ENCODE measurements at regions of chr15 and their contacts with region 1.

Region 1: GRCh38 chr15:82709421-82710207 is at the start of gene AP3B2:
- DNase-seq: peak; percentile 69
- H3K4me3 Mint-ChIP-seq: peak within 1 kb of the TSS; percentile 58
- H3K27ac Mint-ChIP-seq: no peak within 1 kb of the TSS
- H3K4me1 Mint-ChIP-seq: no peaks in the 10 kb centered on the region
- H3K27me3 Mint-ChIP-seq: peaks cover 21% of the 10 kb centered on the region
- total RNA-seq, gene AP3B2: 0.37 to 0.52 TPM

Region 2: DNA sequence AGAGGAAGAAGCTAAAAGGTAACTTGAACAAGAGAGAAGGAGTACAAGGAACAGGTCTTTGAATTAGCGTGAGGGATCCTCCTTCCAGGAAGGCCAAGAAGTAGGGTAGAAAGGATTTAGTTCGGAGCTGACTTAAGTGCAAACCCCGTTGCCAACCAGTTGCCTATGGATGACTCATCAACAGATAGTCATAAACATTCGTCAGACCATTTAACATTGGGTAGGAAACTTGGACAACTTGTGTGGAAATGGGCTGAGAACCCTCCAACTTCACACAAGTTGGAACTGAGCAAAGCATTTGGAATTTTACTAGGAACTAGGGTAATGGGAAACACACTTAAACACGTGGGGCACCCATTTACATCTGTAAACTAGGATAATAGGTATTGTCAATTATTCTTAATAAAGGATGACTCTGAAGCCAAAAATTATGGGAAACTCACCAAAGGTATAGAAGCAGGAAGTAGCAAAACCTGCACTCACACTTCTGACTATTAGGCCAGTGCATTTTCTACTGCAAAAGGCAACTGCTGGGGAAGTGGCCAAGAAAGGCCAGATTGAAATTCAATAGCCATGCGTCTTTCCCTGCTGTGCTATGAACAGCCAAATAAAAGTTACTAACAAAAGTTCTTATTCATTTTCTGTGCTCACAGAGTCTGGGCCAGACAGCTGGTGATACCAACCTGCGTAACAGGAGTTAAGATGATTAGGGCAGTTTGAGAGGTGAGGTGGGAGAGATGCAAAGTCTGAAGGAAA is 1161.1 kb before region 1 on chr15:
- CTCF ChIA-PET with region 1: no interaction called
- intact Hi-C with region 1: no loop called
- DNase-seq: no peak
- H3K4me3 Mint-ChIP-seq: no peak overlapping the region
- H3K27ac Mint-ChIP-seq: no peak overlapping the region
- H3K4me1 Mint-ChIP-seq: no peaks in the 10 kb centered on the region
- H3K27me3 Mint-ChIP-seq: peaks cover 9% of the 10 kb centered on the region

Region 3: DNA sequence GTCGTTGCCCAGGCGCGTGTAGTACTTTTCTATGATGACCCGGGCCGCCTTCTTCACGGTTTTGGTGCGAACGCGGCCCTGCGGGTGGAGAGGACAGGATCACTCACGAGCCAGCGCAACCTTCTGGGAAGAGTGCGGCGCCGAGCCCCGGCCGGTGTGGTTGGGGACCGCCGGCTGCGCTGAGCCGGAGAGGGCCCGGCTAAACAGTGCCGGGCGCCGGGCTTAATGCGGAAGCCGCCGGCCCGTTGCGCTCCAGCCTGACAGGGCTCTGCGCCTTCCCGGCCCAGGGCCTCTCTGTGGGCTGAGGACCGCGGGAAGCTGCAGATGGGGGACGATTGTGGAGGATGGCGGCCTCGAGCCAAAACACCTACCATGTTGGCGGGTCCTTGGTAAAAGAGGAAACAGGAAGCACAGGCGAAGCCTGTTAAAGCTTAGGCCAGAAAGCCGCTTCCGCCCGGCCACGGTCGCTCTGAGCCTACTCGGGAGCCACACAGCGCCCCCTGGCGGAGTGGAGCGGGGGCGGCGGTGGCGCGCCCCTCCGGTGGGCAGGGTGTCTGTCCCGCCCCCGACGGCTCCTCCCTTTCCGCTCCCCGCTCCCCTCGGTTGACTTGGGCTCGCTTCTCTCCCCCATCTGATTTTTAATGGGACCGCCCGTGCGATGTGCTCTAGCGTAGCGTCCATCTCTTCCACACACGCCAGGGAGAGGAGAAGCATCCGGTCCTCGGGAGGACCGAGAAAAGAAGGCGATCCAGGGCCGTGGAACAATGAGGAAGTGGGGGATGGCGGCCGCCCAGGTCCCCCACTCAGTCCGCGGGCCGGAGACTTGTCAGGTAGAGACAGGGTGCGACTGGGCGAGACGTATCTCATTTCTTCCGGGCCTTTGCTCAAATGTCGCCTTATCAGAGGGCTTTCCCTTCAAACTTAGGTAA is 169.3 kb before region 1 on chr15 and contains the start of gene RPS17:
- CTCF ChIA-PET with region 1: no interaction called
- intact Hi-C with region 1: loop called (anchors 1 kb)
- DNase-seq: peak; percentile 96
- H3K4me3 Mint-ChIP-seq: peak within 1 kb of the TSS; percentile 85
- H3K27ac Mint-ChIP-seq: peak within 1 kb of the TSS; percentile 96
- H3K4me1 Mint-ChIP-seq: peaks cover 34% of the 10 kb centered on the region
- H3K27me3 Mint-ChIP-seq: no peaks in the 10 kb centered on the region
- total RNA-seq, gene RPS17: 3,025 to 3,069 TPM

Region 4: DNA sequence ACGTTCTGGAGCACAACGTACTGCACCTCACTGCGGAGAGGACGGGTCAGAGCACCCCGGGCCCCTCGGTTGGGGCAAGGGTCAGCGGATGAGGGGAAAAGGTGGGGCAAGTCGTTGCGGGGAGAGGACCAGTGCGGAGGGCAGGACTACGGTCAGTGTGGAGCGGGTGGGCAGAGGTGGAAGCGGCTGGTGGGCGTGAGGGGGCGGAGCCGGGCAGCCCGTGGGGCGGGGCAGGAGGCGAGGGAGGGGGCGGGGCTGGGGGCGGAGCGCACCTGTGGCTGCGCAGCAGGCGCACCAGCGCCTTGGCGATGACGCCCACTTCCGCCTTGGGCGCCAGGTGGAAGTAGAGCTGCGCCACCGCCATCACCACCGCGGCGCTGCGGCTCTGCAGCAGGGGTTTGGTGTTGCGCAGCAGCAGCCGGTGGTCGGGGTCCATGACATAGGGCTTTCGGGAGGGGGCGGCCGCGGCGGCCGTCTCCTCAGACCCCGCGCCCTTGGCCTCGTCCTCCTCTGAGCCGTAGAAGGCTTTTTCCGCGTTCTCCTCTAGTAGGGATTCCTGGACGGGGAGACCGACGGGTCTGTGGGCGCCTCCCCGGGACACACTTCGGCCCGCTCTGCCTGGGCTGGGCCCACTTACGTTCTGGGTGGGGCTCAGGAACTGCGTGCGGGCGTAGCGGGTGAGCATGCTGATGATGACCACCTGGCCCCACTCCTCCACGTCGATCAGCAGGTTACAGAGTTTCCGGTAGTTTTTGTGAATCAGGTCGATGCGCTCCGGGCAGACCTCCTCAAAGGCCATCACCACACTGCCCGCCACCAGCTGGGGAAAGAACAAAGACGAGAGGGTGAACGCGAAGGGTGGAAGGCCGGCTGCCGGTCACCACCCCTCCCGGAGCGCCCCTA is 29.2 kb before region 1 on chr15:
- CTCF ChIA-PET with region 1: no interaction called
- intact Hi-C with region 1: loop called (anchors 1 kb)
- DNase-seq: peak; percentile 86
- H3K4me3 Mint-ChIP-seq: peak overlapping the region; percentile 88
- H3K27ac Mint-ChIP-seq: peak overlapping the region; percentile 47
- H3K4me1 Mint-ChIP-seq: peaks cover 7% of the 10 kb centered on the region
- H3K27me3 Mint-ChIP-seq: peaks cover 2% of the 10 kb centered on the region

Region 5: DNA sequence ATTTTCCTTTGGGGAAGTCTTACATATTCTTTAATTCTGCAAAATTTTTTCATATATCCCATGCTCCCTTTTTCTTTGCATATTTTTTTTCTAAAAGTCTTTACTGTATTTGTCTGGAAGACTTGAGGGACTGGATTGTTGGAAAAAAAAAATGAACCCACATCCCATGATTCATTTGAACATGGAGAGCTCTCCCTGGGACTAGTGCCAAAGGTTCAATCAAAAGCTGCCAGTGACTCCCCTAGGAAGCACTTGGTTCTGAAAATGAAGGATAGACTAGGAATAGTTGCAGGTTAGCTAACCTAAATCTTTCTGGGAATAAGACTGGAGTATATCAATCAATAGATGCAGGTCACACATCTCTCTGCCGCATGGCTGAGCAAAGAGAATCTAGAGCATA is 591.2 kb after region 1 on chr15:
- CTCF ChIA-PET with region 1: no interaction called
- intact Hi-C with region 1: no loop called
- DNase-seq: no peak
- H3K4me3 Mint-ChIP-seq: no peak overlapping the region
- H3K27ac Mint-ChIP-seq: no peak overlapping the region
- H3K4me1 Mint-ChIP-seq: no peaks in the 10 kb centered on the region
- H3K27me3 Mint-ChIP-seq: peaks cover 44% of the 10 kb centered on the region

Measured in activated naive CD4-positive, alpha-beta T cell treated with anti-CD3 and anti-CD28 coated beads for 36 hours (primary cell).